Activated B cell treated with CpG ODN at 0.5 μM for 24 hours (primary cell): ENCODE measurements at regions of chr12 and their contacts with region 1.

Region 1: GRCh38 chr12:21451529-21451928 is 14.1 kb downstream of the PYROXD1 start:
- DNase-seq: no peak
- ATAC-seq: no peak
- H3K4me3 Mint-ChIP-seq: no peak overlapping the region
- H3K27ac Mint-ChIP-seq: no peak overlapping the region
- H3K4me1 Mint-ChIP-seq: no peaks in the 10 kb centered on the region
- H3K27me3 Mint-ChIP-seq: no peaks in the 10 kb centered on the region
- CTCF ChIP-seq: no peak

Region 2: DNA sequence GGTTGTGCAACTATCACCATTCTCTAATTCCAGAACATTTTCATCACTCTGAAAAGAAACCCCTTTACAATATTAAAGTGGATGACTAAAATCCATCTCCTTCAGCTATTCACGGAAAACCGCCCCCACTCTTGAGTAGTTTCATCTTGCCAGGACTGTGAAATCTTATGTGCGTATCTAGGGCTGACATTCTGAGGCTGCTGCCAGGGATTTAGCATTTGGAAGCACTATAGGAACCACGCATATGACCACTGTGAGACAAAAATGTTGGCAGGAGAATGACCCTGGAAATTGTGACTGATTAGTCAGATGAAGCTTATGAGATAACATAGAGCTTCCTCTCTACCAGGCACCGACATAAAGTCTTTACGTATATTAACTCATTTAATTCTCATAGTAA is 1388.4 kb before region 1 on chr12:
- CTCF ChIA-PET with region 1: no interaction called
- POLR2A ChIA-PET with region 1: no interaction called
- intact Hi-C with region 1: no loop called
- DNase-seq: no peak
- ATAC-seq: no peak
- H3K4me3 Mint-ChIP-seq: no peak overlapping the region
- H3K27ac Mint-ChIP-seq: no peak overlapping the region
- H3K4me1 Mint-ChIP-seq: no peaks in the 10 kb centered on the region
- H3K27me3 Mint-ChIP-seq: no peaks in the 10 kb centered on the region
- CTCF ChIP-seq: no peak

Region 3: GRCh38 chr12:21486000-21486399 is 34.5 kb after region 1 on chr12:
- CTCF ChIA-PET with region 1: no interaction called
- POLR2A ChIA-PET with region 1: no interaction called
- intact Hi-C with region 1: loop called (anchors 5 kb)
- DNase-seq: no peak
- ATAC-seq: no peak
- H3K4me3 Mint-ChIP-seq: no peak overlapping the region
- H3K27ac Mint-ChIP-seq: no peak overlapping the region
- H3K4me1 Mint-ChIP-seq: no peaks in the 10 kb centered on the region
- H3K27me3 Mint-ChIP-seq: no peaks in the 10 kb centered on the region
- CTCF ChIP-seq: no peak